WTC11 (cell line): ENCODE measurements at regions of chr12 and their contacts with region 1.

Region 1: DNA sequence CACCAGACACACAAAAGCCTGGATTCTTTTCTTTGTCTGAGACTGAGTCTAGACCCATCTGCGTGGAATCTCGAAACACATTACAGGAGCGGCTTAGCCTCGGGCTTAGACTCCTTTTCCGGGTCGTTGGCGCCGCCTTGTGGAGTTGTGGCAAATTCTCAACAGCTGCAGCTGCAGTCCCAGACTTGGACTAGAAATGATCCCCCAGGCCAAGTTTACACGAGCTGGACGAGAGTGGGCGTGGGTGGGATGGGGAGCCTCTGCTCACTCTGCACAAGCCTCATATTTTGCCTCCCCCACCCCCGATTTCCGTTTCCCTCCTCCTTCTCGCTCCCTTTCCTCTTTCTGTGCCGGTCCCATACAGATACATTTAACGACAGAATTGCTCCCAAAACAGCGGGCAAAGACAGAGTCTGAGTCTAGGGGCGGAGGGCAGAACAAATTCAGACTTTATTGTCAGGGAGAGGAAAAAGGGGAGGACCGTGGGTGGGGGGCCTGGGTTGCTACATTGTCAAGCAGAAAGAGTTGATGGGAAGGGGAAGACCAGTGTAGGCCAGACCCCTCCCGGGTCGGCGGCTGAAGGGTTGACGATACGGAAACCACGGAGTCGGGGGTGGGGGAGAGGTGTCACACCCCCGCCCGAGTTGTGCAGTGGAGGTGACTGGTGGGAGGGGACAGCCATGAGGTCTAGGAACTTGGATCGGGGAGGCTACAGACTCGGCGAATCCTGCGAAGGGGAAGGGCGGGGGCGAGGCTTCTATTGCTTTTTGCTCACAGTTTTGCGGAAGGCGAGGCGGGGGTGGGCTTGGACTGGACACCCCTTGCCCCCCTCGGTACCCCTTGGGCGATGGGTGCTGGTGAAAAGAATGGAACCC is 4.7 kb upstream of the GPR84 start:
- DNase-seq: peak; percentile 90
- ATAC-seq: peak; percentile 49
- H3K4me3 Mint-ChIP-seq: peak overlapping the region; percentile 75
- H3K27ac Mint-ChIP-seq: no peak overlapping the region
- H3K4me1 Mint-ChIP-seq: peaks cover 24% of the 10 kb centered on the region
- H3K27me3 Mint-ChIP-seq: peaks cover 49% of the 10 kb centered on the region
- CTCF ChIP-seq: peak; percentile 73

Region 2: DNA sequence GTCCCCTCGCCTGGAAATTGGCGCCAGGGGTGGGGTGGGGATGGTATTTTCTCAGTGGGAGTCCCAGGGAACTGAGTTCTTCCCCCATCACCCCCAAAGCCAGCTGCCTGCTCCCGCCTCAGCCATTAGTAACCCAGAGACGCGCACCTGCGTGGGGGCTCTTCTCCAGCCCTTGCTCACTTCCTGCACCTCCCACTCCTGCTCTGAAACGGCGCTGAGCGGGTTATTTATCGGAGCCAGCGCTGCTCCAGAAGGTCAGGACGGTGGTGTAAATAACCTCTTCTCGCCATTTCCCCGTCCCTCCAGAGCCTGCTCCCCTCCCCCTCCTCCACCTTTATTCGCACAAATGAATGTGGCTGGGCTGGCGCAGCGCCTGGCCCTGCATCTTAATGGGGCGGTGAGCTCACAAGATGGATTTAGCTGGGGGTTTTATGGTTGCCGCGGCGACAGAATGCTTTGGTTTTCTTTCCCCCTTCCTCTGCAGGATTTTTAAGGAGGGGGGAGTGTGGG is 16.9 kb before region 1 on chr12:
- CTCF ChIA-PET with region 1: interaction called, 67 read pairs
- POLR2A ChIA-PET with region 1: interaction called, 8 read pairs
- DNase-seq: peak; percentile 70
- ATAC-seq: peak; percentile 55
- H3K4me3 Mint-ChIP-seq: peak overlapping the region; percentile 87
- H3K27ac Mint-ChIP-seq: peak overlapping the region; percentile 92
- H3K4me1 Mint-ChIP-seq: peaks cover 47% of the 10 kb centered on the region
- H3K27me3 Mint-ChIP-seq: peaks cover 18% of the 10 kb centered on the region
- CTCF ChIP-seq: no peak

Region 3: DNA sequence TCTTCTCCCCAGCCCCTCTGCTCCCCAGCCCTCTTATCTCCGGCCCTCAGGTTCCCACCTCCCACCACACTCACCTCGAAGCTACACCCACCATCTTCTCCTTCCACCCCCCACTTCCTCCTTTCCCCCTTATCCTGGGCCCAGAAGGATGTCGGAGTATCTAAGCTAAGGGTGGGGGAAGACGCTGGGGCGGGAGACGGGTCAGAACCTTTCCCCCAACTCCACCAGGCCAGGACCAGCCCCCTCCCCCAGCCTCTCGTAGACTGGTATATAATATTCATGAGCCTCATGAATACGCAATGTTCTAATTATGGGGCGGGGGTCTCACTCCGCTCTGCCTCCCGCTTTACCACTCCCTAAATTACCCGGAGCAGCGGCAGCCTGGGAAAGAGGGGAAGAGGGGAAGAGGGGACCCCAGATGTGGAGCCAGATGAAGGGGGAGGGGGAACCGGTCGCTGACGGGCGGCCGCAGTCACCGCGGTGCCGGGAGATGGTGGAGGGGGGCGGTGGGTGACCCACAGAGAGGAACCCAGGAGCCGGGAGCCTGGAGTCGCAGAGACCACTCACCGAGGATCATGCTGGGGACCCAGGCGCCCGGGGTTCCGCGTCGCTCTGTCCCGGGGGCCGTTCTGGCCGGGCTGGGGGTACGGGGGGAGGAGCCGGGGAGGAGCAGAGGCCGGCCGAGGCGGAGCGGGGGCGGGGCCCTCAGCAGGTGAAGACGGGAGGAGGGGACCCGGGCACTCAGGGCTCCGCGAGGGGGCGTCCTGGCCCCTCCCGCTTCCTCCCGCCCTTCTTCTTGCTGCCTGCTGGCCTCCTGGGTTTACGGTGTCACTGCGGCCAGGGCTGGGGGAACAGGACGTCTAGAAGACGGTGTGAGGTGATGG is 22.0 kb after region 1 on chr12:
- CTCF ChIA-PET with region 1: interaction called, 33 read pairs
- POLR2A ChIA-PET with region 1: no interaction called
- DNase-seq: peak; percentile 85
- ATAC-seq: peak; percentile 69
- H3K4me3 Mint-ChIP-seq: peak overlapping the region; percentile 83
- H3K27ac Mint-ChIP-seq: no peak overlapping the region
- H3K4me1 Mint-ChIP-seq: peaks cover 68% of the 10 kb centered on the region
- H3K27me3 Mint-ChIP-seq: peaks cover 19% of the 10 kb centered on the region
- CTCF ChIP-seq: no peak

Region 4: DNA sequence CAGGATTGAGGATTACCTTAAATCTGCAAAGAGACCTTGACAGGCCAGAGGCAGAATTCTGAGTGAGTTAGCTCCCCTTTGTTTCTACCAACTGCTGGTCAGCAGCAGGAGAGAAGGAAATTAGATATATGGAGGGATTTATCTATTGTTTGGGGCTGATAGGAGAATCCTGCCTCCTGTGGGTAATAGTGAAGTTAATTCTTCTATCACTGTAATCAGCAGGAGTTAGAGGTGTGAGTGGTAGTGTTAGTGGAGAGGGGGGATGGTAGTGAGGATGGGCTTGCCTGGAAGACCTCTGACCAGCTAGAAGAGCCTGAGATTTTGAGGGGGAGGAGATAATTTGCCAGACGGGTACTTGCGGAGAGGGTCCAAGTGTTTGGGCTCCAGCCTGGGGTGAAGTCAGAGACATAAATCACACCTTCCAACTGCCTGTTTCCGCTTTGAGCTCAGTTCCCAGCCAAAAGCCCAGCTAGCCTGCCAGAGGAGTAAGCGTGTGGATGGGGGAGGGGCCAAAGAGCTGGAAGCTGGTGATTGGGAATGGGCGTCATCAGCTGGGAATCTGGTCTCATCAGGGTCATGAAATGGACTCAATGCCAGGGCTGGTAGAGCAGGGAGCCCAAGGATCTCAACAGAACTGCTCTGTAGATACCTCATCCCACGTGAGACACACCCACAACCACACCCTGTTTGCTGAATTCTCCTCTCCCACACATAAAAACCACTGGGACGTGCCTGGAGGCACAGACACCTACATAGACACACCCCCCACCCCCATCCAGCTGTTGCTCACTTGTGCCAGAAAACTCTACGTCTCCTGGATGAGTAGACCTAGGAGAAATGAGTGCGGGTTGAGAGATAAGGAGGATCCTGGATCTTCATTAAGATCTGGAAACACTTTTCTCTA is 63.2 kb after region 1 on chr12:
- CTCF ChIA-PET with region 1: interaction called, 10 read pairs
- POLR2A ChIA-PET with region 1: no interaction called
- DNase-seq: peak; percentile 60
- ATAC-seq: peak; percentile 63
- H3K4me3 Mint-ChIP-seq: peak overlapping the region; percentile 5; the same call in 1 of the 2 replicates
- H3K27ac Mint-ChIP-seq: no peak overlapping the region
- H3K4me1 Mint-ChIP-seq: peaks cover 43% of the 10 kb centered on the region
- H3K27me3 Mint-ChIP-seq: peaks cover 94% of the 10 kb centered on the region
- CTCF ChIP-seq: no peak